HepG2 (cell line): ENCODE measurements at regions of chr7 and their contacts with region 1.

Region 1: GRCh38 chr7:149662591-149663095 is 110.7 kb downstream of the ZNF467 start:
- DNase-seq: peak; percentile 75
- ATAC-seq: peak; percentile 100
- H3K4me3 ChIP-seq: no peak overlapping the region
- H3K27ac ChIP-seq: no peak overlapping the region
- H3K4me1 ChIP-seq: no peaks in the 10 kb centered on the region
- H3K27me3 ChIP-seq: no peaks in the 10 kb centered on the region
- CTCF ChIP-seq: peak; percentile 90
- EP300 ChIP-seq: no peak
- POLR2A ChIP-seq: no peak
- RAD21 ChIP-seq: peak; percentile 83

Region 2: GRCh38 chr7:149604521-149604920 is 58.1 kb before region 1 on chr7:
- CTCF ChIA-PET with region 1: no interaction called
- POLR2A ChIA-PET with region 1: no interaction called
- in situ Hi-C with region 1: no loop called
- intact Hi-C with region 1: no loop called
- DNase-seq: no peak
- ATAC-seq: no peak
- H3K4me3 ChIP-seq: no peak overlapping the region
- H3K27ac ChIP-seq: no peak overlapping the region
- H3K4me1 ChIP-seq: no peaks in the 10 kb centered on the region
- H3K27me3 ChIP-seq: no peaks in the 10 kb centered on the region
- CTCF ChIP-seq: no peak
- EP300 ChIP-seq: no peak
- POLR2A ChIP-seq: no peak
- RAD21 ChIP-seq: no peak

Region 3: DNA sequence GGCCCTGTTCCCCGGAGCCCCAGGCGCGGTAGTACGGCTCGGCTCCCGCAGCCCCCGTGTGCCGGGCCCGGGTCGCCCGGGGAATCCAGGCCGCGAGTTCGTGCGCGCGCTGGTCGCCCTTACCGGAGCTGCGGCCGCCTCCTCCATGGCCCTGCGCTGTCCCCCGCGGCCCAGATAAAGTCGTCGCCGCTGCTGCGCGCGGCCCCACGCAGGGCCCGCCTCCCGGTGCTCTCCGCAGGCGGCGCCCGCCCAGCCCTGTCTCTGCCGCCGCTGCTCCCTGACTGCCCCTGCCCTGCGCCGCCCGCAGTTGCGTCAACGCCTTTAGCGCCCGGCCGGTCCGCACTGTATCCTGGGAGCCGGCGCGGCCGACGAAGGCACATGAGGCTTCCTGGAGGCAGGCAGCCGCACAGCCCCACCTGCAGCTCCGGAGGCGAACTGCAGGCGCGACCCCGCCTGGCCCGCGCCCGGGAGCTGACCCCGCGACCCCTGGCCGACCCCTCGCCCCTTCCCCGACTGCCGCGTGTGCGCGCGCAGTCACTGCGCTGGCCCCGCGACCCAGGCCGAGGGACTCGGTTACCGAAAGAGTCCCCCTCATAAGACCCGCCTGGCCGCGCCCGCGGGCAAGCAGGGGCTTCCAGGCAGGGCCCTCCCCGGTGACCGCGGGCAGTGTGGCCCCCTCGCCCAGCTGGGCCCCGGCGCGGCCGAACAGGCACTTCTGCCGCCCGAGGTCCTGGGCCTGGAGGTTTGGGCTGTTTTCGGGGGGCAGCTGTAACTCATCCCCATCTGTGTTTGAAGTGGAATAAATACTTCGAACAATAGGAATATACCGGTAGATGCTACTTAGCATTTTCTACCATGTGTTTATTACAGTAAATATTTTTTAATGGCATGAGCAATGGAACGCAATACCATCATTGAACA is 38.0 kb before region 1 on chr7:
- CTCF ChIA-PET with region 1: no interaction called
- POLR2A ChIA-PET with region 1: no interaction called
- in situ Hi-C with region 1: no loop called
- intact Hi-C with region 1: no loop called
- DNase-seq: peak; percentile 88
- ATAC-seq: peak; percentile 97
- H3K4me3 ChIP-seq: peak overlapping the region; percentile 81 to 90 (median 86)
- H3K27ac ChIP-seq: peak overlapping the region; percentile 71
- H3K4me1 ChIP-seq: peaks cover 14% of the 10 kb centered on the region
- H3K27me3 ChIP-seq: no peaks in the 10 kb centered on the region
- CTCF ChIP-seq: peak; percentile 93
- EP300 ChIP-seq: peak in 1 of 2 experiments; percentile 36; a peak in 1 of 4 replicates
- POLR2A ChIP-seq: peak; percentile 78 to 93
- RAD21 ChIP-seq: no peak

Region 4: GRCh38 chr7:149686002-149686401 is 23.4 kb after region 1 on chr7:
- CTCF ChIA-PET with region 1: no interaction called
- POLR2A ChIA-PET with region 1: no interaction called
- in situ Hi-C with region 1: no loop called
- intact Hi-C with region 1: no loop called
- DNase-seq: no peak
- ATAC-seq: no peak
- H3K4me3 ChIP-seq: no peak overlapping the region
- H3K27ac ChIP-seq: no peak overlapping the region
- H3K4me1 ChIP-seq: peaks cover 16% of the 10 kb centered on the region
- H3K27me3 ChIP-seq: no peaks in the 10 kb centered on the region; a peak in 2 of 5 replicates
- CTCF ChIP-seq: no peak
- EP300 ChIP-seq: no peak
- POLR2A ChIP-seq: no peak
- RAD21 ChIP-seq: no peak

Region 5: DNA sequence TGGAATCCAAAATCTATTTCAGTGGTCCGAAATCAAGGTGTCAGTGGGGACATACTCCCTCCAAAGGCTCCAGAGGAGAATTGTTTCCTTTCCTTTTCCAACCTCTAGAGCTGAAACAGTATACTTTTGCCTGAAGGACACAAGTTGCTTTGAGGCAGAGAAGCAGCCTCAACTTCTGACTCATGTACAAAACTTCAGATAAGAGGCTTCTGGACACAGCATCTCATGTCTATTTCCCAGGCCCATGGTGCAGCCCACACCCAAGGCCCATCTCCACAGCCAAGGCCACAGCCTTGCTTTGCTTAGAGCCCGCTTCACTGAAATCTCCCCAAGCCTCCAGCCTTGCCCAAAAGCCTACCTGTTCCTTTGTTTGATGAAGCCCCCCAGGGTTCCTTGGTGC is 41.9 kb after region 1 on chr7:
- CTCF ChIA-PET with region 1: interaction called, 6 read pairs
- POLR2A ChIA-PET with region 1: no interaction called
- in situ Hi-C with region 1: no loop called
- intact Hi-C with region 1: loop called (anchors 5 kb)
- DNase-seq: no peak
- ATAC-seq: no peak
- H3K4me3 ChIP-seq: no peak overlapping the region
- H3K27ac ChIP-seq: no peak overlapping the region
- H3K4me1 ChIP-seq: peaks cover 18% of the 10 kb centered on the region
- H3K27me3 ChIP-seq: no peaks in the 10 kb centered on the region
- CTCF ChIP-seq: no peak
- EP300 ChIP-seq: no peak
- POLR2A ChIP-seq: no peak
- RAD21 ChIP-seq: no peak

Region 6: GRCh38 chr7:149742075-149742701 is 79.5 kb after region 1 on chr7:
- CTCF ChIA-PET with region 1: interaction called, 43 read pairs
- POLR2A ChIA-PET with region 1: interaction called, 9 read pairs
- in situ Hi-C with region 1: no loop called
- intact Hi-C with region 1: loop called (anchors 1 kb)
- DNase-seq: peak; percentile 41
- ATAC-seq: peak; percentile 92
- H3K4me3 ChIP-seq: peak overlapping the region; percentile 29 to 59 (median 48); a peak in 4 of 6 replicates
- H3K27ac ChIP-seq: no peak overlapping the region
- H3K4me1 ChIP-seq: peaks cover 12% of the 10 kb centered on the region
- H3K27me3 ChIP-seq: peaks cover 0 to 1% of the 10 kb centered on the region in 2 experiments; a peak in 2 of 5 replicates
- CTCF ChIP-seq: peak; percentile 93
- EP300 ChIP-seq: no peak
- POLR2A ChIP-seq: no peak
- RAD21 ChIP-seq: peak; percentile 77

Region 7: DNA sequence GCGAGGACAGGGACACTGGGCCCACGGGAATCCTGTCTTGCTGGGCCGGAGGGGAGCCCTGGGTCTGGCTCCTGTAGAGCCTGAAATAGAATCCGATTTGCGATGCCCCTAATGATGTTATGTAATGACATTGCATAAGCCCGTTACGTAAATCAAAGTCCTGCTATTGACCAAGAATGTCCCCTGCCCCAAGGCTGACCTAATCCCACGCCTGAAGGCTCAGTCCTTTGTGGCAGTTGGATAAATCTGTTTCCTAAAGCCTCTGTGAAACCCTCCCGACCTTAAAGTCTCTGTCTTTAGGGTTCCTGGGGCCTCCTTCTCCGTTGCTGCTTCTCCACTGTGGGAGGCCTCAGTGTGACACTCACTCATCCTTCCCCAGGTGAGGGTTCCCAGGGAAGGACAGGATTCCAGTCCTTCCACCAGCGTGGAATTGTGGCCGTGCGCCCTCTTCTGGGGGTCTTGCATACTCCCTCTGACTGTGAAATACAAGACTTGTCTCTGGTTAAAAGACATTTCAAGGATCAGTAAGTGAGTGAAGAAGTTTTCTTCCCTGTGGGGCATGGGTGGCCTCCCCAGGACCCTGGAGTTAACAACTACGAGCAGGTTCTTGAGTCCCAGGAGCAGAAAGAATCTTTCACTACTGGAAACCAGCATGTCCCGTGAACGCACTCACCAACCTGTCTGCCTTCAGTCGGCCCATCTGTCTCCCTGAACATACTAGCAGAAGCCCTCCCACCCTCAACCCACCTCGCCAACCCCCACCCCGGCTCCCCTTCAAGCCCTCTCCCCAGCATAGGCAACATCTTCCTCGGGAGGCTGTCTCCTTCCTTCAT is 91.0 kb after region 1 on chr7:
- CTCF ChIA-PET with region 1: interaction called, 11 read pairs
- POLR2A ChIA-PET with region 1: no interaction called
- in situ Hi-C with region 1: loop called (anchors 5 kb)
- intact Hi-C with region 1: loop called (anchors 1 kb)
- DNase-seq: peak; percentile 35
- ATAC-seq: peak; percentile 89
- H3K4me3 ChIP-seq: no peak overlapping the region
- H3K27ac ChIP-seq: no peak overlapping the region
- H3K4me1 ChIP-seq: peaks cover 1% of the 10 kb centered on the region; the same call in 1 of the 2 replicates
- H3K27me3 ChIP-seq: peaks cover 2 to 10% of the 10 kb centered on the region in 2 experiments; a peak in 2 of 5 replicates
- CTCF ChIP-seq: peak; percentile 81
- EP300 ChIP-seq: no peak
- POLR2A ChIP-seq: no peak
- RAD21 ChIP-seq: 0 out of 2 replicates have a peak, but pooled peaks have one; percentile 8

Region 8: GRCh38 chr7:149799397-149800171 is 136.9 kb after region 1 on chr7:
- CTCF ChIA-PET with region 1: interaction called, 3 read pairs
- POLR2A ChIA-PET with region 1: no interaction called
- in situ Hi-C with region 1: no loop called
- intact Hi-C with region 1: loop called (anchors 1 kb)
- DNase-seq: peak; percentile 35
- ATAC-seq: peak; percentile 63
- H3K4me3 ChIP-seq: no peak overlapping the region
- H3K27ac ChIP-seq: no peak overlapping the region
- H3K4me1 ChIP-seq: no peaks in the 10 kb centered on the region
- H3K27me3 ChIP-seq: 0 out of 5 replicates have a peak, but pooled peaks cover 0 to 2% of the 10 kb centered on the region in 2 experiments
- CTCF ChIP-seq: peak; percentile 91
- EP300 ChIP-seq: no peak
- POLR2A ChIP-seq: no peak
- RAD21 ChIP-seq: no peak